ENCODE measurements at regions of chr3 and their contacts with region 1.

Region 1: GRCh38 chr3:190204200-190204599 is 83.5 kb upstream of the P3H2 start:
- DNase-seq: no peak
- H3K4me3 ChIP-seq: no peak overlapping the region
- H3K27ac ChIP-seq: no peak overlapping the region
- H3K4me1 ChIP-seq: peaks cover 0 to 9% (median 0%) of the 10 kb centered on the region in 6 donors
- H3K27me3 ChIP-seq: peaks cover 0 to 7% (median 0%) of the 10 kb centered on the region in 7 donors
- CTCF ChIP-seq: no peak
- POLR2A ChIP-seq: no peak

Region 2: DNA sequence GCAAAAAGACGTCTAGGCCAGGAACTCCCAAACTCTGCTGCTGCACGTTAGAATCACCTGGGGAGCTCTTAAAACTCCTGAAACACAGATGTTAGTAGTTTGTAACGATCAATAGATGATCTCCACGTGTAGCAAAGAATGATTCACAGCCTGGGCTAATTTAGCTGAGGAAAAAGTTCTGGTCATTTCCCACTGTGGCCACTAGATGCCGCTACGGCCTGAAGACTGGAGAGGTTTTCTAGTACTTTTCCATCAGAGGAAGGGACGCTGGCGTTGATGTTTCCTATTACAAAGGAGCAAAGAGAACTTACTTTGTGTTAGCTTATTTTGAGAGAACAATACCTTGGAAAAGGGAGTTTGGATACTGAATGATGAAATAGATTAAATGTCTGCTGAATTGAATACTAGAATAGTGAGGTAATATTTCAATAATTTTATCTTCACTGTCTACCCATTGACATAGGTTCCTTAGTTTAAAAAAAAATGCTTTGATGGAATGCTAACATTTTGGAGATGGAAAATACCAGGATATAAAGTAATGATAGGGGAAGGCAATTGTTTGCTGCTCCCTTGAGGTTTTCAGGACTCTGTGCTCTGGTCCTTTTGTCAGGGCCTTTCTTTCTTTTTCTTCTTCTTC is 242.6 kb before region 1 on chr3:
- intact Hi-C with region 1: loop called (anchors 5 kb)
- DNase-seq: peak; percentile 79
- H3K4me3 ChIP-seq: no peak overlapping the region
- H3K27ac ChIP-seq: peak overlapping the region in 1 of 8 donors; percentile 18
- H3K4me1 ChIP-seq: peaks cover 0 to 14% (median 7%) of the 10 kb centered on the region in 6 donors
- H3K27me3 ChIP-seq: peaks cover 0 to 15% (median 0%) of the 10 kb centered on the region in 7 donors
- CTCF ChIP-seq: peak; percentile 62 to 88 (median 83)
- POLR2A ChIP-seq: no peak

Region 3: GRCh38 chr3:190321789-190322603 is 117.8 kb after region 1 on chr3 and contains the start of gene CLDN1:
- intact Hi-C with region 1: no loop called
- DNase-seq: peak; percentile 90
- H3K4me3 ChIP-seq: peak within 1 kb of the TSS; percentile 36 to 71 (median 44)
- H3K27ac ChIP-seq: peak within 1 kb of the TSS in 1 of 8 donors; percentile 27
- H3K4me1 ChIP-seq: peaks cover 0 to 18% (median 10%) of the 10 kb centered on the region in 6 donors
- H3K27me3 ChIP-seq: peaks cover 0 to 47% (median 11%) of the 10 kb centered on the region in 7 donors
- CTCF ChIP-seq: peak; percentile 31 to 92 (median 80)
- POLR2A ChIP-seq: no peak
- total RNA-seq, gene CLDN1: 0.26 to 3.0 (median 0.91) TPM

Measured in spleen (tissue), 13 donors.